ENCODE measurements at regions of chr15 and their contacts with region 1.

Region 1: GRCh38 chr15:85689729-85690128 is 105.0 kb downstream of the KLHL25 start:
- DNase-seq: peak; percentile 65 to 77 (median 71)
- H3K4me3 ChIP-seq: peak overlapping the region; percentile 71 to 80
- H3K4me3 Mint-ChIP-seq: peak overlapping the region; percentile 96 to 100 (median 98)
- H3K27ac ChIP-seq: peak overlapping the region; percentile 83
- H3K27ac Mint-ChIP-seq: peak overlapping the region; percentile 96 to 100 (median 98)
- H3K4me1 ChIP-seq: peaks cover 73% of the 10 kb centered on the region
- H3K4me1 Mint-ChIP-seq: peaks cover 59 to 75% (median 64%) of the 10 kb centered on the region in 4 donors
- H3K27me3 ChIP-seq: no peaks in the 10 kb centered on the region
- H3K27me3 Mint-ChIP-seq: no peaks in the 10 kb centered on the region

Region 2: DNA sequence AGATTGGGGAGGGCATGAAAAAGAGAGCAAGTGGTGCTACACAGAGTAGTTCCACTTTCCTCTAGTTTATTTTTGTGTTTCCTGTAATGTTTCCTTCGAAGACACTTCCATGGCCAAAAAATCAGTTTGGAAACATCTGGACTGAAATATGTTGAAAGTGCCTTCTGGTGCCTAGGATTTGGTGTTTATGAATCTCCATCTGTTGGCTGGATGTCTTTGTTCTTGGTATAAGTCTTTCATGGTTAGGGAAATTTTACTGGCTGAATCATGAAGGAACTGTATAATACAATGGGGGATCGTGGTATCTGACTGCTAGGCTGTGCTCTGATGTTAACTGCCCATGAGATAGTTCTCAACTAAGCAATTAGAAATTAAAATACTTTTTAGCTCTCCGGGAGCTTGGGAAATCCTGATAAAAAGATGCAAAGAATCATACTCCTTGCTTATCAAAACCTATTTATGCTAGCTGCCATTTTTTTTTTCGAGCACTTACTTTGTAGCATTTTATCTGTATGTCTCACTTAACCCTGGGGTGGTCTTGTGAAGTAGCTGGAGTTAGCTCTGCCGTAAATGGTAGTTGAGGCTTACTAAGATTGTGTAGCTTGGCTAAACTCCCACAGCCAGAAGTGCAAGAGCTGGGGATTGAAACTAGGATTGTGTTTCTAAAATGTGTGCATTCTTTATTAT is 287.4 kb before region 1 on chr15:
- CTCF ChIA-PET with region 1: no interaction called
- POLR2A ChIA-PET with region 1: no interaction called
- intact Hi-C with region 1: no loop called
- DNase-seq: no peak
- H3K4me3 ChIP-seq: no peak overlapping the region
- H3K4me3 Mint-ChIP-seq: peak overlapping the region in 4 of 8 donors; percentile 0 to 49 (median 16)
- H3K27ac ChIP-seq: no peak overlapping the region
- H3K27ac Mint-ChIP-seq: peak overlapping the region; percentile 7 to 72 (median 28)
- H3K4me1 ChIP-seq: peaks cover 47% of the 10 kb centered on the region
- H3K4me1 Mint-ChIP-seq: peaks cover 53 to 90% (median 73%) of the 10 kb centered on the region in 4 donors
- H3K27me3 ChIP-seq: no peaks in the 10 kb centered on the region
- H3K27me3 Mint-ChIP-seq: no peaks in the 10 kb centered on the region

Region 3: DNA sequence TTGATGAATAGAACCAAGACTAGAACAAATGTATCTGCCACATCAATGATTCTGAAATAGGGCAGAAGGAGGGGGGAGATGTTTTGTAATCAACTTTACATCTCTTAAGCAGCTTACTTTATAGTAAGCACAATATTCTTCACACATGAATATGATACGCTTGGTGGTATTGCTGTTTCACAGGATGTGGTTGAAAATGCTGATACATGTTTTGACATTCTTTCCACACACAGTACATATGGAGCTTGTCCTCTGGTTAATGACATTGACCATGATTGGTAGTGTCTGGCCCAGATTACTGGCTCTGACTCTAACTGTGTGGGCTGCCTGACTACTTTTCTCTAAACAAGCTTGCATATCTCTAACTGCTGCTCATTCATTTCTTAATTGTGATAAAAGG is 63.9 kb before region 1 on chr15:
- CTCF ChIA-PET with region 1: interaction called, 21 read pairs
- POLR2A ChIA-PET with region 1: interaction called, 72 read pairs
- intact Hi-C with region 1: no loop called
- DNase-seq: peak; percentile 66 to 77 (median 68)
- H3K4me3 ChIP-seq: peak overlapping the region in 1 of 2 donors; percentile 12
- H3K4me3 Mint-ChIP-seq: peak overlapping the region; percentile 13 to 83 (median 78)
- H3K27ac ChIP-seq: peak overlapping the region; percentile 39
- H3K27ac Mint-ChIP-seq: peak overlapping the region; percentile 82 to 97 (median 93)
- H3K4me1 ChIP-seq: peaks cover 65% of the 10 kb centered on the region
- H3K4me1 Mint-ChIP-seq: peaks cover 59 to 79% (median 73%) of the 10 kb centered on the region in 4 donors
- H3K27me3 ChIP-seq: no peaks in the 10 kb centered on the region
- H3K27me3 Mint-ChIP-seq: no peaks in the 10 kb centered on the region

Region 4: DNA sequence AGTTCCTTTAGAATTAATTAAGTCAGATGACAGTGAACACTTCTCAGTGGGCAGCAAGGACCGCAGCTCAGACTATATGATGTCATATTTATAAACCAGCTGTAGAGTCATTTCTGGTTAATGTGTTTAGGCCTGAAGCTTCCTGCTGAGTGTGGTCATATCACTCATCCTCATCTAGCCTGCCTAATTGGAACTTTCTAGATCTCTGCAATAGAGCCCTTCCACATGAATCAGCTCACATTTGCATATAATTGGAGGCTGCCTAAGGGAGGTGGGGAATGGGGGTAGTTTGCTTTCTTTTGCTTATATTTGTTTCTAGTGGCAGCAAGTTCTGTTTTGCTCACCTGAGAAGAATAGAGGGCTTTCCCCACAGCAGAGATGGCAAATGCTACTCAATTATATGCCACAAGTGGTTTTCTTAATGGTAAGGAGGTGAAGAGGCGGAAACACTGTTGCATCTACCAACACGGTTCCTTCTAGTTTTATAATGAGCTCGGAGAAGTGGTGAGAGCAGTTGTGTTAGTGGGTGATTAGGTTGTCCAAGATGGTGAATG is 43.1 kb before region 1 on chr15:
- CTCF ChIA-PET with region 1: interaction called, 4 read pairs
- POLR2A ChIA-PET with region 1: interaction called, 14 read pairs
- intact Hi-C with region 1: no loop called
- DNase-seq: peak; percentile 22 to 72 (median 55)
- H3K4me3 ChIP-seq: no peak overlapping the region
- H3K4me3 Mint-ChIP-seq: peak overlapping the region in 6 of 8 donors; percentile 22 to 53 (median 34)
- H3K27ac ChIP-seq: peak overlapping the region; percentile 15
- H3K27ac Mint-ChIP-seq: peak overlapping the region; percentile 62 to 93 (median 84)
- H3K4me1 ChIP-seq: peaks cover 37% of the 10 kb centered on the region
- H3K4me1 Mint-ChIP-seq: peaks cover 39 to 56% (median 45%) of the 10 kb centered on the region in 4 donors
- H3K27me3 ChIP-seq: no peaks in the 10 kb centered on the region
- H3K27me3 Mint-ChIP-seq: no peaks in the 10 kb centered on the region

Region 5: DNA sequence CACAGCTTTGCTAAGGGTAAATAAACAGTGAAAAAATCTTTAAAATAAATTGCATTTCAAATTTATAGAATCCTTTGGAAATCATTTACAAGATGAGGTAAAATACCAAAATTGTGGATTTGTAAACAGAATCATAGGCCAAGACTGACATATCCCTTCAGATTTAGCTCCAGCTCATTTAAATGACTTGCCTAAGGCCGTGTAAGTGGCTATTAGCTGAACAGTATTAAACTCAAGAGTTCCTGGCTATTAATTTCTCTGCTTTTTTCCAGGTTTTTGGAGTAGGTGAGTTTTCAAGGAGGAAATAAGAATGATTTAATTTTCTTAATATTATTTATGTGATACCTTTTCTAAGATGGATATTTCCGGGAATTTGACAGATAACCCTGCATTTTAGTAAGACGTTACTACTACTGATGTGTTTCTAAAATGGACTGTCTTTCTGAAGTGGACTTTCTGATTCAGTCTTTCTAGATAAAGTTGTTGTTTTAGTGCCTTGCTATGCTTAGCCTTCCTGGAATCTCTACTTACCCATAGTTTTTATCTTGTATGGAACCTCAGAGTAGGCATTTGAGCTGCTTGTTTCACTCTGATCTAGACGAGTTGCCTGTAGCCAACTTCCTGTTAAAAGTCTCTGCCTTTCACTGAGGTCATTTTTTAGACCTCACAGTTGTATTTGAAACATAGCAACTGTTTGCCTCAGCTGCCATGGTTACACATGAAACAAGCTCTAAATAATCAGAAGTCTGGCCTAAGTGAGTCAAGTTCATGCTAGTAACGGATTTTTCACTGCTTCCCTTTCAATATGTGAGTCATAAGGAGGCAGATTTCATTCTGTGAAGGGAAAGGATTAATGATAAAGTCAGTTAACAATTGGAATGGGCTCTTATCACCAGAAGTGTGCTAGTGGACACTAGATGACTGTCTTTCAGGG is 22.0 kb before region 1 on chr15:
- CTCF ChIA-PET with region 1: interaction called, 3 read pairs
- POLR2A ChIA-PET with region 1: interaction called, 31 read pairs
- intact Hi-C with region 1: loop called (anchors 2 kb)
- DNase-seq: peak; percentile 79 to 91 (median 90)
- H3K4me3 ChIP-seq: no peak overlapping the region
- H3K4me3 Mint-ChIP-seq: peak overlapping the region; percentile 47 to 81 (median 60)
- H3K27ac ChIP-seq: peak overlapping the region; percentile 81
- H3K27ac Mint-ChIP-seq: peak overlapping the region; percentile 80 to 100 (median 97)
- H3K4me1 ChIP-seq: peaks cover 25% of the 10 kb centered on the region
- H3K4me1 Mint-ChIP-seq: peaks cover 18 to 28% (median 22%) of the 10 kb centered on the region in 4 donors
- H3K27me3 ChIP-seq: no peaks in the 10 kb centered on the region
- H3K27me3 Mint-ChIP-seq: no peaks in the 10 kb centered on the region

Region 6: DNA sequence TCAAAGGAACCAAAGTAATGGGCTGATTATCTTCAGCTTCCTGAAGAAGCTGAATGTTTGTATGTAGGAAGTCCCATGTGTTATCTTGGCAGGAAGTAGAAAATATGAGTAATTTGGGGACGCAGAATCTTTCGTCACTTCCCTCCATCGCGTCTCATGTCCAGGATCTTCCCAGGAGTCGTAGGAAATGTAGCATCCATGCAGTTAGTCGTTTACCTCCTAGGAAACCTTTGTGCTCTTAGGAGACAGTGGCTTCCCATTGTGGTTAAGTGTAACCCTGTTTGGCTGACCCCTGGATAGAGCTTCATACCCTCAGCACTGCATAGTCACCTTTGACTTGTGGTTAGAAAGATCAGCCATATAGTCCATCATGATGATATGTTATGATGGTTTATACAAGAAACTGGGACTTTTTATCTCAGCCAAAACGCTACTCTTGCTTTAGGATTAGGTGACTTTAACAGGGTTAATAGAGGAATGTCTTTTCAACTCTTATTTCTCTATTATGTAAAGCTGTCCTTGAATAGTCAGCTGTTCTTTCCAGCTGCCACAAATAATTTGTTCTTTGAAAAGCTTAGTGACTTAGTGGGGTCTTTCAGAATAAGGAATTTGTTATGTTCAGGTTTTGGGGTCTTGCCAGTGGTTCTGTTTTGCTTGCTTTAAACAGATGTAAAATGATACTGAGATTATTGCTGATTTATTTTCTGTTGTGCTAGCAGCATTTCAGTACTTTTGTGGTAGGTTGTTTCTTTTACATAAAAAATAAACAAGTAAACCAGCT is 12.8 kb after region 1 on chr15:
- CTCF ChIA-PET with region 1: interaction called, 15 read pairs
- POLR2A ChIA-PET with region 1: interaction called, 277 read pairs
- intact Hi-C with region 1: loop called (anchors 1 kb)
- DNase-seq: peak; percentile 39 to 76 (median 56)
- H3K4me3 ChIP-seq: peak overlapping the region; percentile 21 to 54
- H3K4me3 Mint-ChIP-seq: peak overlapping the region; percentile 68 to 86 (median 76)
- H3K27ac ChIP-seq: peak overlapping the region; percentile 82
- H3K27ac Mint-ChIP-seq: peak overlapping the region; percentile 94 to 98 (median 97)
- H3K4me1 ChIP-seq: peaks cover 87% of the 10 kb centered on the region
- H3K4me1 Mint-ChIP-seq: peaks cover 60 to 87% (median 71%) of the 10 kb centered on the region in 4 donors
- H3K27me3 ChIP-seq: no peaks in the 10 kb centered on the region
- H3K27me3 Mint-ChIP-seq: no peaks in the 10 kb centered on the region

Region 7: GRCh38 chr15:85707519-85708338 is 18.0 kb after region 1 on chr15:
- CTCF ChIA-PET with region 1: interaction called, 15 read pairs
- POLR2A ChIA-PET with region 1: interaction called, 277 read pairs
- intact Hi-C with region 1: loop called (anchors 1 kb)
- DNase-seq: peak in 2 of 5 donors; percentile 55 to 73
- H3K4me3 ChIP-seq: peak overlapping the region; percentile 42 to 61
- H3K4me3 Mint-ChIP-seq: peak overlapping the region; percentile 83 to 95 (median 87)
- H3K27ac ChIP-seq: peak overlapping the region; percentile 86
- H3K27ac Mint-ChIP-seq: peak overlapping the region; percentile 96 to 100 (median 97)
- H3K4me1 ChIP-seq: peaks cover 72% of the 10 kb centered on the region
- H3K4me1 Mint-ChIP-seq: peaks cover 69 to 89% (median 80%) of the 10 kb centered on the region in 4 donors
- H3K27me3 ChIP-seq: no peaks in the 10 kb centered on the region
- H3K27me3 Mint-ChIP-seq: no peaks in the 10 kb centered on the region

Region 8: GRCh38 chr15:85723960-85724945 is 34.5 kb after region 1 on chr15:
- CTCF ChIA-PET with region 1: interaction called, 5 read pairs
- POLR2A ChIA-PET with region 1: interaction called, 12 read pairs
- intact Hi-C with region 1: loop called (anchors 5 kb)
- DNase-seq: peak; percentile 31 to 55 (median 53)
- H3K4me3 ChIP-seq: no peak overlapping the region
- H3K4me3 Mint-ChIP-seq: peak overlapping the region; percentile 59 to 82 (median 70)
- H3K27ac ChIP-seq: peak overlapping the region; percentile 64
- H3K27ac Mint-ChIP-seq: peak overlapping the region; percentile 85 to 99 (median 97)
- H3K4me1 ChIP-seq: peaks cover 49% of the 10 kb centered on the region
- H3K4me1 Mint-ChIP-seq: peaks cover 36 to 46% (median 41%) of the 10 kb centered on the region in 4 donors
- H3K27me3 ChIP-seq: no peaks in the 10 kb centered on the region
- H3K27me3 Mint-ChIP-seq: no peaks in the 10 kb centered on the region

Region 9: DNA sequence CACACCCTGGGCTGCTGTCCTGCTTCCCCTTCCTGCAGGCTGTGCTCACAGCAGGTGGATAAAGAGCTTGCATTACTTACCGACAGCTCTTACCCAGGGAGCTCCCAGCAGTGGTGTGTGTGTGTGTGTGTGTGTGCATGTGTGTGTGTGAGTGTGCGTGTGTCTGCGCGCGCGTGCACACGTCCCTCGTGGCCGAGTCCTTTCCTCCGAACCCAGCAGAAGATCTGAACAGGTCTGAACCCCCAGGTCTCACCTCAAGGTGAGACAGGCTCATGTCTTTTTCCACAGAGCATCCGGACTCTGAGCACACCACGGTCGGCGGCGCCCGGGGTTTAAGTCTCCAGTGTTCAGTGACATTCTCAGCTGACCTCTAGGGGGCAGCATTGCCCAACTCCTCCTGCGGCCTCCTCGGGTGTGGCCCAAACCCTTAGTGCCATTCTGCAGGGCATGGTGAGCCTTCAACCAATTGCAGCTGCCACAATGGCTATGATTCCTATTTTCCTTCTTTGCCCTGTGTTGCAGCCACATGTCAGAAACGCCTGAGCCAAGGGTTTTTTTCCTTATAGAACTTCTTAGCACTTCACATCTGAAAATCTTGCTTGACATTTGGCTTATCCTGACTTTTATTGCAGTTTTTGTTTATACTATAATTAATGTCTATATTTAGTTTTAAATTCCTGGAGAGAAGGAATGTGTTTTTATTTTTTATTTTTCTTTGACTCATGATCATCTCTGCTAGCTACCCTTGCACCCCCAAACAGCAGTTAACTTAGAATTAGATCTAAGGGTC is 169.1 kb after region 1 on chr15:
- CTCF ChIA-PET with region 1: no interaction called
- POLR2A ChIA-PET with region 1: no interaction called
- intact Hi-C with region 1: no loop called
- DNase-seq: peak; percentile 66 to 71 (median 69)
- H3K4me3 ChIP-seq: peak overlapping the region in 1 of 2 donors; percentile 19
- H3K4me3 Mint-ChIP-seq: peak overlapping the region in 7 of 8 donors; percentile 1 to 80 (median 60)
- H3K27ac ChIP-seq: no peak overlapping the region
- H3K27ac Mint-ChIP-seq: peak overlapping the region in 5 of 7 donors; percentile 15 to 82 (median 47)
- H3K4me1 ChIP-seq: no peaks in the 10 kb centered on the region
- H3K4me1 Mint-ChIP-seq: peaks cover 5 to 11% (median 8%) of the 10 kb centered on the region in 4 donors
- H3K27me3 ChIP-seq: peaks cover 5% of the 10 kb centered on the region
- H3K27me3 Mint-ChIP-seq: peaks cover 16 to 18% of the 10 kb centered on the region in 2 donors

Region 10: GRCh38 chr15:85955501-85956391 is 266.0 kb after region 1 on chr15:
- CTCF ChIA-PET with region 1: no interaction called
- POLR2A ChIA-PET with region 1: no interaction called
- intact Hi-C with region 1: no loop called
- DNase-seq: no peak
- H3K4me3 ChIP-seq: no peak overlapping the region
- H3K4me3 Mint-ChIP-seq: peak overlapping the region in 2 of 8 donors; percentile 4 to 32
- H3K27ac ChIP-seq: no peak overlapping the region
- H3K27ac Mint-ChIP-seq: peak overlapping the region in 2 of 7 donors; percentile 3 to 67
- H3K4me1 ChIP-seq: no peaks in the 10 kb centered on the region
- H3K4me1 Mint-ChIP-seq: peaks cover 0 to 10% (median 7%) of the 10 kb centered on the region in 4 donors
- H3K27me3 ChIP-seq: peaks cover 4% of the 10 kb centered on the region
- H3K27me3 Mint-ChIP-seq: peaks cover 5 to 7% of the 10 kb centered on the region in 2 donors

Measured in CD4-positive, alpha-beta memory T cell (primary cell).